MCF 10A (cell line): ENCODE measurements at regions of chr20 and their contacts with region 1.

Region 1: DNA sequence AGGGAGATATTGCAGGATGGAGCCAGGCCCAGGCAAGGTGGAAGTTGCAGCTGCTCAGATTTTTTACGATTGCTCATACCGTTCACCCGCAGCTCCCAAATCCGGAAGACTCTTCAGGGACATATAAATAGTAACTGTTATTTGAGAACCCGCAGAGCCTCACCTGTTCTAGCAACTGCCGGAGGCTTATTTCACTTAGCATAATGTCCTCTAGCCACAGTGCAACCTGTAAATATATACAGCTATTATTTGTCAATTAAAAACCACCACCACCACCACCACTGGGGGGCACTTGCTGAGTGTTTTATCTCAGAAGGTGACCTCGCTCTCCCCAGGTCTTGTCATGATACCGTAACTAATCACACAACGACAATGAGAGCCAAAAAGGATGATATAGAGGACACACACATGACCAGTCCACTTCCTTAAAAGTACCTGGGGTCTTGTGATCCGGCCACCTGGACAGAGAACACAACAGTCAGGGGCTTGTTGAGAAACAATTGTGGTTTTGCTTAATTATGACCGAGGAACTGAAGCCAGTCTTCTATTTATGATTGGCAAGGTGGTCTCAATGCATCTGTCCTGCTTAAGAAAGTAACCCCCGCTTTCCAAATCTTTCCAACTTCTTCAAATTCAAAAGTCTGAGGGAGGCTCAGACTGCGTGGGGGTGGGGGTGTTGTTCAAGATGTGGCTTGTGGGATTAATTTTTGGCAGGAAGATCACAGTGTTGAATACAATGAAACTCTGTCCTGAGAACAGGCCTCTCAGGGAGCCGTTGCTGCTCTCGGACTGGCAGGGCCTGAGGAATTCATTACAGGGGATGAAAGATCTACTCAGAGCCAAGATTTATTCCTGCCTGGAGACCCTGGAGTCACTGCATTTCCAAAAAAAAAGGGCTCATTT is 107.7 kb upstream of the PRND start:
- DNase-seq: peak; percentile 80
- H3K4me3 Mint-ChIP-seq: peak overlapping the region; percentile 19
- H3K27ac Mint-ChIP-seq: peak overlapping the region; percentile 43
- H3K4me1 Mint-ChIP-seq: peaks cover 17% of the 10 kb centered on the region
- H3K27me3 Mint-ChIP-seq: no peaks in the 10 kb centered on the region
- CTCF ChIP-seq: peak; percentile 63

Region 2: DNA sequence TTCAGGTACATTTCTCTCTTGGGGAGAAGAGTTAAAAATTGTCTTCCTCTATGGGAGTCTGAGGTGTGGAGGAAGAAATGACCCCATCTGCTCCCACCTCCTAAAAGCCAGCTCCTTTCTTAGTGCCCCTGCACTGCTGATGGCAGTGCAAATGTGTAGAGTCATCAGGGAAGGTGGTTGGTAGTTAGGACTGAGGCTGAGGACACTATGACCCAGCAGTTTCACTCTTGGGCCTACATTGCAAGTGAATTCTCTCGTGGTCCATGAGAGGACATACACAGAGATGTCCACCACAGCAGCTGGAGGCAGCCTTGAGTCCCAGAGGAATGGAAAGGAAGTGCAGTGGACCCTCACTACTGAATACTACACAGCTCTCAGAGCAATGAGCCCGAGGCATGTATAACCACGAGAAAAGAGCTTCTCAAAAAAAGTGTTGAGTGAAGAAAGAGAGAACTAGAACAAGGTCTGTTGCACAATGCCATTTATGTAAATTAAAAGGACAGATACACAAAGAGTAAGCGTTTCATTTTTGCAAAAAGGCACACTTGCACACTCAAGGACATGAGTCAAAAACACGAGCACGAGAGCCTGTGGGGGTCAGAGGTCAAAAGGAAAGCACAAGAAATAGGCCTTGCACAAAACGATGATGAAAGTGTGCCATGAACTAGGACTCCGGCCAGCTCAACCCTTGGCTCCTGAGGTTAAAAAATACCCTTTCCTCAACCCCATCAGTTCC is 200.5 kb before region 1 on chr20:
- CTCF ChIA-PET with region 1: no interaction called
- POLR2A ChIA-PET with region 1: no interaction called
- intact Hi-C with region 1: no loop called
- DNase-seq: no peak
- H3K4me3 Mint-ChIP-seq: no peak overlapping the region
- H3K27ac Mint-ChIP-seq: no peak overlapping the region
- H3K4me1 Mint-ChIP-seq: no peaks in the 10 kb centered on the region
- H3K27me3 Mint-ChIP-seq: no peaks in the 10 kb centered on the region
- CTCF ChIP-seq: no peak

Region 3: GRCh38 chr20:4555188-4555890 is 58.6 kb before region 1 on chr20:
- CTCF ChIA-PET with region 1: no interaction called
- POLR2A ChIA-PET with region 1: no interaction called
- intact Hi-C with region 1: no loop called
- DNase-seq: peak; percentile 68
- H3K4me3 Mint-ChIP-seq: no peak overlapping the region
- H3K27ac Mint-ChIP-seq: no peak overlapping the region
- H3K4me1 Mint-ChIP-seq: peaks cover 12% of the 10 kb centered on the region
- H3K27me3 Mint-ChIP-seq: no peaks in the 10 kb centered on the region
- CTCF ChIP-seq: no peak

Region 4: DNA sequence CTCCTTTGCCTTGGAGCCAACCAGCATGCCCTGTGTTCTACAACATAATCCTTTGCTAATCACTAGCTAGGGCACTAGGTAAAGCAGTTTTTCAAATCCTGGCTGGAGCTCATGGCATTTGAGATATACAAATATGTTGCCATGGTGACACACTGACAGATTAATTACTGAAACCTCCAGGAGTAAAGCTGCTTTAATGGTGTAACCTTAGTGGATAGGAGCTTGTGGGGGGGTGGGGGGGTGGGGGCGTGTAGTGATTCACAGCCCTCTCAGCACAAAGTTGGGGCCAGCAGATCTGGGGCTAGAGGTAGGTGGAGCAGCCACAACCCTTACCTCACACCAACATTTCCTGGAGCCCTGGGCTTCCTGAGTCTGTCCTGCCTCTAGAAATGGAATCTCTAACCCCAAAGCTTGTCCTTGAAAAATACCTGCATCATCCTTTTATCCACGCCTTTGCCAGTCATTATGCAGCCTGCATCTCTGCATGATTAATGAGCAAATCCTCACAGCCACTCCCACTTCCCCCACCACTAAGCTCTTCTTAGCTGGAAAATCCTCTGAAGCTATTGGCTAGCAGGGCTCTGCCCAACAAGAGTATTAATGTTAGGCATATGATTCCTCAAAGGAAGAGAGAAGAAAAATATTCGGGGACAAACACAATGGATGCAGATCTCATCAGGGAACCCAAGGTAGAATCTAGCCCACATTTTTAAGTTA is 23.3 kb after region 1 on chr20:
- CTCF ChIA-PET with region 1: interaction called, 10 read pairs
- POLR2A ChIA-PET with region 1: interaction called, 4 read pairs
- intact Hi-C with region 1: no loop called
- DNase-seq: peak; percentile 9
- H3K4me3 Mint-ChIP-seq: no peak overlapping the region
- H3K27ac Mint-ChIP-seq: no peak overlapping the region
- H3K4me1 Mint-ChIP-seq: peaks cover 5% of the 10 kb centered on the region
- H3K27me3 Mint-ChIP-seq: no peaks in the 10 kb centered on the region
- CTCF ChIP-seq: no peak

Region 5: GRCh38 chr20:4666001-4666479 is 52.1 kb after region 1 on chr20:
- CTCF ChIA-PET with region 1: interaction called, 7 read pairs
- POLR2A ChIA-PET with region 1: interaction called, 9 read pairs
- intact Hi-C with region 1: loop called (anchors 1 kb)
- DNase-seq: peak; percentile 80
- H3K4me3 Mint-ChIP-seq: peak overlapping the region; percentile 62
- H3K27ac Mint-ChIP-seq: peak overlapping the region; percentile 72
- H3K4me1 Mint-ChIP-seq: peaks cover 32% of the 10 kb centered on the region
- H3K27me3 Mint-ChIP-seq: no peaks in the 10 kb centered on the region
- CTCF ChIP-seq: no peak

Region 6: GRCh38 chr20:4689220-4689619 is 75.3 kb after region 1 on chr20:
- CTCF ChIA-PET with region 1: interaction called, 9 read pairs
- POLR2A ChIA-PET with region 1: interaction called, 14 read pairs
- intact Hi-C with region 1: loop called (anchors 2 kb)
- DNase-seq: no peak
- H3K4me3 Mint-ChIP-seq: peak overlapping the region; percentile 82
- H3K27ac Mint-ChIP-seq: peak overlapping the region; percentile 64
- H3K4me1 Mint-ChIP-seq: peaks cover 54% of the 10 kb centered on the region
- H3K27me3 Mint-ChIP-seq: no peaks in the 10 kb centered on the region
- CTCF ChIP-seq: no peak

Region 7: GRCh38 chr20:4713401-4713800 is 99.4 kb after region 1 on chr20:
- CTCF ChIA-PET with region 1: interaction called, 234 read pairs
- POLR2A ChIA-PET with region 1: interaction called, 13 read pairs
- intact Hi-C with region 1: no loop called
- DNase-seq: peak; percentile 80
- H3K4me3 Mint-ChIP-seq: peak overlapping the region; percentile 11
- H3K27ac Mint-ChIP-seq: peak overlapping the region; percentile 81
- H3K4me1 Mint-ChIP-seq: peaks cover 9% of the 10 kb centered on the region
- H3K27me3 Mint-ChIP-seq: no peaks in the 10 kb centered on the region
- CTCF ChIP-seq: no peak

Region 8: DNA sequence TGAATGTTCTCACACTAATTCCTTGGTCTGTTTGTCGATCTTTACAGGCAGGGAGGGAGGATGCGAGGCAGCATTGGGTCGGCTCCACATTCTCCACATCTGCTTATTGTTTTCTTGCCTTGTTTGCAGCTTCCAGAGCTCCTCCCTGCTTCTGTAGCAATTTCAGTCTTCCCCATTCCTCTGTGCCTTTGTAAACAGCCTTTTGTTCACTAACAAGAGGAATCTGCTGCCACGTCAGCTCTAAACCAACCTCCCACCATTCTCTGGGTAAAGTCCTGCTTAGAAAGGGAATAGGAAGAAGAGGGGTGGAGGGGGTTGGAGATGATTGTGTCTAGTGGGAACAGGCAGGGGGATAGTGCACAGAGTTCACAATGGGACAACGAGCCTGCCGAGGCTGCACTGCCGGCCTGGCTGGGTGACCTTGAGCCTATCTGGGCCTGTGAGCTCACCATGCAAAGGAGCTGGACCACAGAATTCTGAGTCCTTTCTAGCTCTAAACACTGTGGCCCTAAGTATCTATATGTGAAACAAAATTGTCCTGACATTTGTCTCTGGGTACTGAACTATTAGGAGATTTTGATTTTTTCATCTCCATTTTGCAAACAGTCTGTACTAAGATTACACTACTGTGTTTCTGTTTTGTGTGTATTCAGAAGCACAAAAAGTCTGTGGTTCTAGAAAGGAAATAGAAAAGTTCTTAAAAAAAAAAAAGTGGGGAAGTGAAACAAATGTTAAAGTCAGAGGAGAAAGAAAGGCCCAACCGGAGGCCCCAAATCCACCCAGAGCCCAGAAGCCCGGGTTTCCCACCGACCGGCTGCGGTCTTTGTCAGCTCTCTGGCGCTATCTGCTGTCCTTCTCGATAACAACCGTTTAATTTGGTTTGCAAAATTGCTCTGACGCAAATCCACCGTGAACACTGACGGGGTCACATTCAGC is 106.3 kb after region 1 on chr20:
- CTCF ChIA-PET with region 1: interaction called, 234 read pairs
- POLR2A ChIA-PET with region 1: interaction called, 19 read pairs
- intact Hi-C with region 1: loop called (anchors 1 kb)
- DNase-seq: peak; percentile 72
- H3K4me3 Mint-ChIP-seq: no peak overlapping the region
- H3K27ac Mint-ChIP-seq: no peak overlapping the region
- H3K4me1 Mint-ChIP-seq: peaks cover 7% of the 10 kb centered on the region
- H3K27me3 Mint-ChIP-seq: no peaks in the 10 kb centered on the region
- CTCF ChIP-seq: peak; percentile 86

Region 9: DNA sequence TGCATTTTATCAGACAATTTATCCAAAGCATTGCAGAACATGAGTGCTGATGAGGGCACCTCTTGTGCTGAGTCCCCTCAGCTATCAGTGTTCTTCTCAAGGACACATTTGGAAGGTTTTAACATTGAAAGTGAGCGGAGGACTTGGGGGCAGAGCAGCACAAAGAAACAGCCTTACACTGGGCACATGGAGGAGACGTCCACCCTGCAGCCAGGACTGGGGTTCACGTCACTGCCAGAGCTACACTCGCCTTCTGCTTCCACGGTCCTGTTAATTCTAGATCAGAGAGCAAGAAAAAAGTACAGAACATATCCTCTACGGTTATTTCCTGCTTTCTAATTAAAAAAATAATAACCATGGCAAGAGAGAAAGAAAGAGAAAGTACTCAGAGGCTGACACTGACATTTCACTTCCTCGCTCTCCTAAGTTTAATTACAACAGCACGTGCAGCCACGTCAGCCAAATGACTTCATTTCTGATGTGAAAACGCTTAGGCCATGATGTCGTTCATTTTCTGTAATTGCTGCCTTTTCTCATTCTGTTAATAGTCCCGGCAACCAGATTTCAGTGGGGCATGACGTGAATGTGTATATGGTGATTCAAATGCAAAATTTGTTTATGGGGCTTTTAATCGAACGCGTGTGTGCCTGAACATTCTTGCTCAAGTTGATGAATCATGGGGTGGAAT is 112.9 kb after region 1 on chr20:
- CTCF ChIA-PET with region 1: interaction called, 234 read pairs
- POLR2A ChIA-PET with region 1: interaction called, 6 read pairs
- intact Hi-C with region 1: no loop called
- DNase-seq: peak; percentile 38
- H3K4me3 Mint-ChIP-seq: no peak overlapping the region
- H3K27ac Mint-ChIP-seq: no peak overlapping the region
- H3K4me1 Mint-ChIP-seq: no peaks in the 10 kb centered on the region
- H3K27me3 Mint-ChIP-seq: peaks cover 2% of the 10 kb centered on the region
- CTCF ChIP-seq: no peak

Region 10: DNA sequence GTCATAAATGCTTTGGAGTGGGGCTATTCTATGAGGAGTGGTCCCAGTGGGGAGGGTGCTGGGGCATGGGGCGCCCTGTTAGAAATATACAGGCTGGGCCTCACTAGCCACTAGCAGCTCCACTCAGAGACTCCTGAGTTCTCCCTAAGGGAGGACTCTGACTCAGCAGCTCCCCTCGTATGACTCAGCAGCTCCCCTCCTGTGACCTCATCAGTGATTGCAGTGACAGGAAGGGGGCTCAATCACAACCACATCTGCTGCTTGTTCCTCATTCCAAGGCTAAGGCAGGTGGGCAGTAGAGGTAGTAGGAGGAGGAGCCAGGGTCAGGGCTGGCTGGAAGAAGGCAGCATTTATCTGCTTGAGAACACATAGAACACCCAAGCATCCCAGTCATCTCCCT is 181.4 kb after region 1 on chr20:
- CTCF ChIA-PET with region 1: no interaction called
- POLR2A ChIA-PET with region 1: no interaction called
- intact Hi-C with region 1: no loop called
- DNase-seq: peak; percentile 29
- H3K4me3 Mint-ChIP-seq: no peak overlapping the region
- H3K27ac Mint-ChIP-seq: no peak overlapping the region
- H3K4me1 Mint-ChIP-seq: no peaks in the 10 kb centered on the region
- H3K27me3 Mint-ChIP-seq: no peaks in the 10 kb centered on the region
- CTCF ChIP-seq: no peak